ENCODE measurements at regions of chr4 and their contacts with region 1.

Region 1: DNA sequence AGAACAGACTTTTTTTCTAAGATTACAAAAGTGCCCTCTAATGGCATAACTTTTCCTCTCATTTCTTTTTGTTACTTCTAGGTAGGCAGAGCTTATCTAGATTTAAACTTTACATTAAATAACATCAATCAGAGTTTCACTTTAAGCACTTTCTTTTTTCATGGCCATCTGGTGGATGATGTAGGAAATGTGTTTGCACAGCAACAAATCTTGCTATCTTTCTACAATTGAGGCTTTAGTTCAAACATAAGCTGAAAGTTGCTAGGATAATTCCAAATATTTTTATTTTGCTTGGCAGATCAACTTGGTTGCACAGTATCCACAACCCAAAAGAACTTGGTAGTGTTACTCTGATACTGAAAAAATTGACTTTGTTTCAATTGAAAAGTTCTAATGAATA is 22.0 kb downstream of the NDNF start:
- DNase-seq: peak in 3 of 14 experiments; percentile 21 to 23 (median 21)
- ATAC-seq: no peak
- H3K4me3 ChIP-seq: no peak overlapping the region
- H3K4me3 Mint-ChIP-seq: no peak overlapping the region
- H3K27ac ChIP-seq: no peak overlapping the region
- H3K27ac Mint-ChIP-seq: no peak overlapping the region
- H3K4me1 ChIP-seq: no peaks in the 10 kb centered on the region
- H3K4me1 Mint-ChIP-seq: peaks cover 6% of the 10 kb centered on the region
- H3K27me3 ChIP-seq: no peaks in the 10 kb centered on the region
- H3K27me3 Mint-ChIP-seq: peaks cover 4% of the 10 kb centered on the region
- CTCF ChIP-seq: no peak

Region 2: GRCh38 chr4:120718979-120719566 is 331.2 kb before region 1 on chr4:
- CTCF ChIA-PET with region 1: no interaction called
- POLR2A ChIA-PET with region 1: no interaction called
- intact Hi-C with region 1: loop called in 1 of 2 experiments (anchors 5 kb)
- DNase-seq: peak in 4 of 14 experiments; percentile 17 to 53 (median 37)
- ATAC-seq: no peak
- H3K4me3 ChIP-seq: no peak overlapping the region
- H3K4me3 Mint-ChIP-seq: no peak overlapping the region
- H3K27ac ChIP-seq: no peak overlapping the region
- H3K27ac Mint-ChIP-seq: no peak overlapping the region
- H3K4me1 ChIP-seq: no peaks in the 10 kb centered on the region
- H3K4me1 Mint-ChIP-seq: no peaks in the 10 kb centered on the region
- H3K27me3 ChIP-seq: no peaks in the 10 kb centered on the region
- H3K27me3 Mint-ChIP-seq: peaks cover 15% of the 10 kb centered on the region
- CTCF ChIP-seq: peak; percentile 51

Region 3: DNA sequence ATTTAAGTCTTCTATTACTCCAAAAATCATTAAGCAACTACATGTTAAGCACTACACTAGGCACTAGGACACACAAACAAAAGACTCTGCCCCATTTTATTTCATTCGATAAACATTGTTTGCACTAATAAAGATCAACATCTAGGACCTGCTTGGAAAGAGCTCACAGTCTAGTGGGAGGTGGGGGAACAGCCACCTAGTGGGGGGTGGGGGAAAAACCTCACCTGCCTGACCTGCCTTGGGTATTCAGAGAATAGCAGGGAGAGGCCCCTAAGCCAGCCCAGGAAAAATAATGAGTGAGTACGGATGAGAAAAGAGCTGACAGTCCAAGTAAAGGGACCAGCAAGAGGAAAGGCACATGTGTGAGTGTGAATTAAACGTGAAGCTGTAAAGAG is 180.0 kb before region 1 on chr4:
- CTCF ChIA-PET with region 1: no interaction called
- POLR2A ChIA-PET with region 1: no interaction called
- intact Hi-C with region 1: loop called in 1 of 2 experiments (anchors 5 kb)
- DNase-seq: no peak
- ATAC-seq: no peak
- H3K4me3 ChIP-seq: no peak overlapping the region
- H3K4me3 Mint-ChIP-seq: no peak overlapping the region
- H3K27ac ChIP-seq: no peak overlapping the region
- H3K27ac Mint-ChIP-seq: no peak overlapping the region
- H3K4me1 ChIP-seq: no peaks in the 10 kb centered on the region
- H3K4me1 Mint-ChIP-seq: no peaks in the 10 kb centered on the region
- H3K27me3 ChIP-seq: no peaks in the 10 kb centered on the region
- H3K27me3 Mint-ChIP-seq: no peaks in the 10 kb centered on the region
- CTCF ChIP-seq: no peak

Region 4: DNA sequence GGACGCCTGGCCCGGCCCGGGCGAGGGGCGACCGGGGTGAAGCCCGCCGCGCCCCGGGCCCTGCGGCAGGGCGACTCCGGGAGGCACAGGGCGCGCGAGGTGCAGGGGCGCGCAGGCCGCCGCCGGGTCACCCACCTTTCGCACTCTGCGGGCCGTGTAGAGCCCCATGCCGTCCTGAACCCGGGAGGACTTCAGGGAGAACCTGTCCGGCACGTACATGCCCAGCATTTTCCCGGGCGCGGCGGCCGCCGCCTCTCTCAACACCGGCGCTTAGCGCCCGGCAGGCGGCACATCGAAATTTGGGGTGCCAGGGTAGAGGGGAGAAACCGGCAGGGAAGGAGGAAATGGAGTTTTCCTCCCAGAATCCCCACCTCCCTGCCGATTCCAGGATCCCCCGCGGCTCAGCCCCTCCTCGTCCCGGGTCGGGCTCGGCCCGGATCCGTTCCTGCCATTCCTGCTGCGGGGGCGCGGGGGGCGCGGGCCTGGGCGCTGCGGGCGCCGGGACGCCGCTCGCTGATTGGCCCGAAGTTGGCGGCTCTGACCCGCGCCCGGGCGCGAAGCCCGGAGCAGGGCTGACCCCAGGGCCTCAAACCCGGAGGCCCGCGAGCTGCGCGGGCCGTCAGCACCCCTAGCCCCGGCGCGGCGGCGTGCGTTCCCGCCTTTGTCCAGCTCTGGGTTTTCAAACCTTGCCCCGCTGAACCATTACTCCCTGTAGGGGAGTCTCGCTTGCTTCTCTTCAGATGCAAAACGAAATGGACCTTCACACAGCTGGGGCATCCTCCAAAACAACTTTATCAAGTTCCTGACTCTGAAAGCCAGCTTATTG is 127.7 kb before region 1 on chr4 and contains the start of gene PRDM5:
- CTCF ChIA-PET with region 1: no interaction called
- POLR2A ChIA-PET with region 1: no interaction called
- intact Hi-C with region 1: loop called (anchors 5 to 10 kb)
- DNase-seq: peak in 11 of 14 experiments; percentile 3 to 44 (median 13)
- ATAC-seq: peak; percentile 50
- H3K4me3 ChIP-seq: peak within 1 kb of the TSS; percentile 61
- H3K4me3 Mint-ChIP-seq: peak within 1 kb of the TSS; percentile 91
- H3K27ac ChIP-seq: no peak within 1 kb of the TSS
- H3K27ac Mint-ChIP-seq: peak within 1 kb of the TSS; percentile 56
- H3K4me1 ChIP-seq: peaks cover 16% of the 10 kb centered on the region
- H3K4me1 Mint-ChIP-seq: peaks cover 14% of the 10 kb centered on the region
- H3K27me3 ChIP-seq: peaks cover 7 to 9% of the 10 kb centered on the region in 2 experiments
- H3K27me3 Mint-ChIP-seq: peaks cover 39% of the 10 kb centered on the region
- CTCF ChIP-seq: no peak
- total RNA-seq, gene PRDM5: 0.14 to 0.22 TPM

Region 5: DNA sequence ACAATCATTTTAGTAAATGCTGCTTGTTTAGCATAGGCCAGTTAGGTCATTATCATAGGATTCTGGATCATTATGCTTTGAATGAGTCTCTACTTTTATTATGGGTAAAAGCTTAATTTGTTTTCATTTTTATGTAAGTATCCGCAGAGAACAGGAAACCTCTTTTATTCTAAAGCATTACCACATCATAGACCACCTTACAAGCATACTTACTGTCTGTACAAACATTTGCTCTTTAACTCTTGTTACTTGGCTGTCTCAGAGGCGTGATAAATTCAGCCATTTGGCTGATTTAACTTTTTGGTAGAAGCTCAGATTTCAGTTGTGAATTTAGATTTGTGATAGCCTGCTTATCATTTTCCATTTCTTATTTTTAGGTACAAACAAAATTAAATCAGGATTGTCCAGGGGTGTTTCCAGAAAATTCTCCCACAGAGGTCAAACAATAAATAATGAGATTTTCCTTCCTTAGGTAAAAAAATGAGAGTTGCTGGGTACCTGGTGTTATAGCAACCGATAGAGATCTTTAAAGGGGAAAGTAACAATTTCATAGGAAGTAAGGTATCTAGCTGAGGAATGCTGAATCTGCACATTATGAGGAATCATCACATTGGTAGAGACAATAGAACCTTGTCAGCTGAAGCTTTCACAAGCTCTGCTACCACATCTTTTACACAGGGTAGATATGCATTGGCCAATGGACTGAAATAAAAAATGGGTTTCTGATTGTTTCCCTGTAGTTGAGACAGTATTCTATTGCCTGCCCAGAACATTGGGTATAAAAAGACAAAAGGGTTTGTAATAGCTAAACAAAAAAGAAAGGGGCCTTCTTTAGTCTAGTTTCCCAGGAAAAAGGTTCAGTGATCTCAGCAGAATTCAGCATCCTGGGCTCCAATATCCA is 40.5 kb before region 1 on chr4:
- CTCF ChIA-PET with region 1: no interaction called
- POLR2A ChIA-PET with region 1: no interaction called
- intact Hi-C with region 1: loop called in 1 of 2 experiments (anchors 5 kb)
- DNase-seq: peak in 3 of 14 experiments; percentile 34 to 41 (median 35)
- ATAC-seq: peak; percentile 92
- H3K4me3 ChIP-seq: no peak overlapping the region
- H3K4me3 Mint-ChIP-seq: peak overlapping the region; percentile 34
- H3K27ac ChIP-seq: no peak overlapping the region
- H3K27ac Mint-ChIP-seq: peak overlapping the region; percentile 84
- H3K4me1 ChIP-seq: peaks cover 7% of the 10 kb centered on the region
- H3K4me1 Mint-ChIP-seq: peaks cover 70% of the 10 kb centered on the region
- H3K27me3 ChIP-seq: no peaks in the 10 kb centered on the region
- H3K27me3 Mint-ChIP-seq: no peaks in the 10 kb centered on the region
- CTCF ChIP-seq: no peak

Region 6: GRCh38 chr4:121096629-121097028 is 46.3 kb after region 1 on chr4:
- CTCF ChIA-PET with region 1: no interaction called
- POLR2A ChIA-PET with region 1: no interaction called
- intact Hi-C with region 1: no loop called
- DNase-seq: peak in 3 of 14 experiments; percentile 38 to 52 (median 41)
- ATAC-seq: no peak
- H3K4me3 ChIP-seq: no peak overlapping the region
- H3K4me3 Mint-ChIP-seq: no peak overlapping the region
- H3K27ac ChIP-seq: no peak overlapping the region
- H3K27ac Mint-ChIP-seq: no peak overlapping the region
- H3K4me1 ChIP-seq: no peaks in the 10 kb centered on the region
- H3K4me1 Mint-ChIP-seq: no peaks in the 10 kb centered on the region
- H3K27me3 ChIP-seq: no peaks in the 10 kb centered on the region
- H3K27me3 Mint-ChIP-seq: no peaks in the 10 kb centered on the region
- CTCF ChIP-seq: peak; percentile 77

Region 7: GRCh38 chr4:121112530-121112929 is 62.2 kb after region 1 on chr4:
- CTCF ChIA-PET with region 1: no interaction called
- POLR2A ChIA-PET with region 1: no interaction called
- intact Hi-C with region 1: no loop called
- DNase-seq: peak in 2 of 14 experiments; percentile 6 to 23
- ATAC-seq: no peak
- H3K4me3 ChIP-seq: no peak overlapping the region
- H3K4me3 Mint-ChIP-seq: no peak overlapping the region
- H3K27ac ChIP-seq: no peak overlapping the region
- H3K27ac Mint-ChIP-seq: no peak overlapping the region
- H3K4me1 ChIP-seq: no peaks in the 10 kb centered on the region
- H3K4me1 Mint-ChIP-seq: peaks cover 8% of the 10 kb centered on the region
- H3K27me3 ChIP-seq: no peaks in the 10 kb centered on the region
- H3K27me3 Mint-ChIP-seq: no peaks in the 10 kb centered on the region
- CTCF ChIP-seq: peak; percentile 62

Region 8: GRCh38 chr4:121270389-121270788 is 220.1 kb after region 1 on chr4:
- CTCF ChIA-PET with region 1: no interaction called
- POLR2A ChIA-PET with region 1: no interaction called
- intact Hi-C with region 1: no loop called
- DNase-seq: no peak
- ATAC-seq: no peak
- H3K4me3 ChIP-seq: no peak overlapping the region
- H3K4me3 Mint-ChIP-seq: no peak overlapping the region
- H3K27ac ChIP-seq: no peak overlapping the region
- H3K27ac Mint-ChIP-seq: no peak overlapping the region
- H3K4me1 ChIP-seq: no peaks in the 10 kb centered on the region
- H3K4me1 Mint-ChIP-seq: peaks cover 25% of the 10 kb centered on the region
- H3K27me3 ChIP-seq: no peaks in the 10 kb centered on the region
- H3K27me3 Mint-ChIP-seq: no peaks in the 10 kb centered on the region
- CTCF ChIP-seq: no peak

Measured in CD4-positive, alpha-beta T cell (primary cell).